AG04449 (cell line): ENCODE measurements at regions of chr20 and their contacts with region 1.

Region 1: DNA sequence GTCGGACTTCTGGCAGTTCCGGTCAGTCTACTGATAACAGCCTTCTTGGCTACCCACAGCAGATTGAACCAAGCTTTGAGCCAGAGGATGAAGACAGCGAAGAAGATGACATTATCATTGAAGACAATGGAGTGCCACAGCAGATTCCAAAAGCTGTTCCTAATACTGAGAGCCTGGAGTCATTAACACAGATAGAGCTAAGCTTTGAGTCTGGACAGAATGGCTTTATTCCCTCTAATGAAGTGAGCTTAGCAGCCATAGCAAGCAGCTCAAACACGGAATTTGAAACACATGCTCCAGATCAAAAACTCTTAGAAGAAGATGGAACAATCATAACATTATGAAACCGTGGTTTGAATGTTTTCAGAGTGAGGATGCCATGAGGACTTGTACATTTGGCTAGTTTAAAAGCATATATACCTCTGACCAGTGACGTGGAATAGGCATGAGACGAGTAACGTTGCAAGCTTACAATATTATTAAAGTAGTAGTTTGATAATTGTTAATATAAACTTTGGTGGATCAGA is 18.8 kb downstream of the PARD6B start:
- DNase-seq: no peak
- H3K4me3 ChIP-seq: no peak overlapping the region
- CTCF ChIP-seq: no peak

Region 2: DNA sequence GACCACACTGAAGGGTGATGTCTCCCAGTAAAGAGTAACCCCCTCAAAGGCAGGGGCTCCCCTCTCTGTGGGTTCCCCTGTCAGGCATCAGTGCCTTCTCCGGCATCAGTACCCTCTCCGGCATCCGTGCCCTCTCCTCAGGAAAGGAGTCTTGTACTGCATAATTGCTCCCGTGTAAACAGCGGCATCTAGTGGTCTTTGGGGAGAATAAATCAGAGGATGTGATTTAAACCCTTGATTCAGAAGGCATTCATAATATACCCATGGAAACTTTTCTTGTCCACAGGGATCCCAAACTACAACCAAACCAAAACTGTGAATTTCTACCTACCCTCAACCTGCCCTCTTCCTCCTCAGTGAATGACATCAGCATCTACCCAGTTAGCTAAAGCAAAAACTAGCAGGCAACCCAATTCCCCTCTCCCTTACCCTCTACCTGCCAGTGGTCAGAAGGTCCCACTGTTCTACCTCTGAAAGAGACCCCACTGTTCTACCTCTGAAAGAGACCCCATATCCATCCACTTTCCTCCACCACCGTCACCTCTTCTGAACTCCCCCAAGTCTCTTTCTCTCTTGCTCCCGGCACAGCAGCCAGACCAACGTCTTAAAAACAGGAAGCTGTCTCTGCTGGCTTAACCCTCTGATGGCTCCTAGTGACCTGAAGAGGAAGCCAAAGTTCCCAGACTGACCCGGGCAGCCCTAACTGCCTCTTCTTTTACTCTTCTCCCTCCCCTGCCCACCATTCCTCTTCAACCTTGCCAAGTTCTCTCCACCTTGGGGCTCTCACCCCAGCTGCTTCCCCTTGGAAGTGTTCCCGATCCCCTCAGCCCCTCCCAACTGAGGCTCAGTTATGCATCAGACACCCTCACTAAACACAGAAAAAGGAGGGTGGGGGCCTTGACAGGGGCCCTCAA is 664.5 kb before region 1 on chr20:
- CTCF ChIA-PET with region 1: no interaction called
- POLR2A ChIA-PET with region 1: no interaction called
- DNase-seq: no peak
- H3K4me3 ChIP-seq: no peak overlapping the region
- CTCF ChIP-seq: peak; percentile 65

Region 3: DNA sequence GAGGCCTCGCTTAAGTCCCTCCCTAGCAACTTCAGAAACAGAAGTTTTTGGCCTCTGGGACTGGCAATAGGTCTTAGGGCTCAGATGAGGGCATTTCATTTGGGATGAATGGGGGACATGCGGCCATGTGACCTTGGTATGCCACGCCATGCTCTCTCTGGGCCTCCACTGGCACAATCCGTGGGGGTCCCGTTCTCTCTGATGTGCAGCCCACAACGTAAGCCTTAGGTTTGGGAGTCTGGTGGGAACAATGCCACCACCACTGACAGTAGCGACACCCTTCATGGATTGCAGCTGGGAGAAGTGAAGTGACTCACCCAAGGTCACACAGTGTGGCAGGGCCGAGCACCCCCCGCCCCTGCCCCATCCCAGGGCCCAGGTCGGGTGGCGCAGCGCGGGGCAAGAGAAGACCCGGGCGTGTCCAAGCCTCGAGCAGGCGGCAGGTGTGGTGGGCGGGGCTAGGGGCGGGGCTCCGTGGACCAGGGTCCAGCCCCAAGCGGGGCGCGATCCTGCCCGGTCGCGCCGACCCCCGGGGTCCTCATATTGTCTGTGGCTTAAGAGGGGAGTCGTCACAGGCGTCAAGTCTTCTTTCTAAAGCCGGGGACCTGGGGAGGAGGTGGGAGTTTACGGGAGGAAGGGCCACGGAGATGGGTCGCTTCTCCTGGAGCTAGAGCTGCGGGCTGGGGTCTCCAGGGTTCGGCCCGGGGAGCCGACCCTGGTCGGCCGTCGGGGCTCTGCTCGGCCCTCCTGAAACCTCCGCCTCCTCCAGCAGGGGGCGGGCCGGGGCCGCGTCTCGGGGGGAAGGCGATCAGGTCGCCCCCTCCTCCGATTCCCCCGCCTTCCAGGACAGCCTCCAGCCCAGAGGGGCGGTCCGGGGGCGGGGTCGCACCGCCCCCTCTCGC is 560.3 kb before region 1 on chr20:
- CTCF ChIA-PET with region 1: interaction called, 14 read pairs
- POLR2A ChIA-PET with region 1: no interaction called
- DNase-seq: no peak
- H3K4me3 ChIP-seq: peak overlapping the region; percentile 94
- CTCF ChIP-seq: peak; percentile 92

Region 4: GRCh38 chr20:50645253-50646118 is 104.7 kb before region 1 on chr20:
- CTCF ChIA-PET with region 1: interaction called, 17 read pairs
- POLR2A ChIA-PET with region 1: no interaction called
- DNase-seq: peak; percentile 82
- H3K4me3 ChIP-seq: no peak overlapping the region; the same call in 1 of the 2 replicates
- CTCF ChIP-seq: no peak

Region 5: DNA sequence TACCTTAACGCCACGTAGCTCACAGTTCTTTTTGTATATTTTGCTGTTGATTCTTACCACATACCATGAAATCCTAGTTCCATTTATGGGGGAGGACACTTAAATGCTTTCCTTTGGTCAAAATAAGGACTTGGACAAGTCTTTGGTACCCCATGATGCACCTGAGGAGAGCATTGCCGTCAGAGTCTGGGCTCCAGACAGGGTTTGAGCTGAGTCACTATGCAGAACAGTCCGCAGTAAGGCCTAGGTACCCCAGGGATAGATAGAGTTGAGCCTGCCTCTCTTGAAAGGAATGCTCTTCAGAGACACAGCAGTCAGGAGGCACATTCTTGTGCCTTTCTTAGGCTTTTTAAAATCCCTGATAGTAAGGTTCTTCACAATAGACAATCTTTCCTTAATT is 12.9 kb before region 1 on chr20:
- CTCF ChIA-PET with region 1: interaction called, 21 read pairs
- POLR2A ChIA-PET with region 1: no interaction called
- DNase-seq: no peak
- H3K4me3 ChIP-seq: no peak overlapping the region
- CTCF ChIP-seq: no peak

Region 6: DNA sequence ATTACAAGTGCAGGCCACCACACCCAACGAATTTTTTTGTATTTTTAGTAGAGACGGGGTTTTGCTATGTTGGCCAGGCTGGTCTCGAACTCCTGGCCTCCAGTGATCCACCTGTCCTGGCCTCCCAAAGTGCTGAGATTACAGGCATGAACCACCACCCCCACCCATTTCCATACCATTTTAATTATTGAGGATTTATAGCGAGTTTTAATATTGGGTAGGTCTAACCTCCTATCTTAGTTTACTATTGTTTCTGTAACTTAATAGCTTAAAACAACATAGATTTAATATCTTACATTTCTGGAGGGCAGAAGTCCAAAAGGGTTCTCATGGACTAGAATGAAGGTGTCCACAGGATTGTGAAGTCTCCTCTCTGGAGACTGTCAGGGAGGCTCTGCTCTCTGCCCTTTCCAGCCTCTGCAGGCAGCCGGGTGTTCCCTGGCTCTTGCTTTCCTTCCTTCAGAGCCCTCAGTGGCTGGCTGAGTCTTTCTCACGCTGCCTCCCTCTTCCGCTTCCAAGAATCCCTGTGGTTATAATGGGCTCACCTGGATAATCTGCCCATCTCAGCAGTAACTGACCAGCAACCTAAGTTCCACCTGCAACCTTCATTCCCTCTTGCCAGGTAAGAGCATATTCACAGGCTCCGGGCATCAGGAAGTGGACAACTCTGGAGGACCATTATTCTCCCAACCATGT is 26.1 kb after region 1 on chr20:
- CTCF ChIA-PET with region 1: interaction called, 13 read pairs
- POLR2A ChIA-PET with region 1: no interaction called
- DNase-seq: no peak
- H3K4me3 ChIP-seq: no peak overlapping the region
- CTCF ChIP-seq: no peak